A673 (cell line): ENCODE measurements at regions of chrX and their contacts with region 1.

Region 1: DNA sequence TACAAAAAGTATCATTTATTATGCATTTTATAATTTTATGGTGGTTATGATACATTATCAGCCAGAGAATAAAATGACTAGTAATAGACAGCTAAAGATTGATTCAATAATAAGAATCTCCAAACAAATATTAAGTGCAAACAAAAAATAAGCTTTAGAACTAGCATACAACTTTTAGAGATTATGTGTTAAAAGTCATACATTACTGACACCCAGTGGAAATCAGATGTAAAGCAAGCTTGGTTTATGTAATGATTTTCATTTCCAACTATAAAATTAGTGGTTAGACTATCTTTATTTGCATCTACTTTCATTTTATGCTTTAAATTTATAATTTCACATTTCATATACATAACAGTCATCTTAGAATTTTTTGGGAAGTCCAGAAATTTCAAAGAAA is 57.7 kb downstream of the IL13RA2 start:
- DNase-seq: peak; percentile 3
- H3K4me3 ChIP-seq: no peak overlapping the region
- H3K27ac ChIP-seq: no peak overlapping the region
- H3K4me1 ChIP-seq: no peaks in the 10 kb centered on the region
- H3K27me3 ChIP-seq: peaks cover 27% of the 10 kb centered on the region
- CTCF ChIP-seq: peak; percentile 65

Region 2: GRCh38 chrX:115147220-115147619 is 187.5 kb after region 1 on chrX:
- CTCF ChIA-PET with region 1: no interaction called
- POLR2A ChIA-PET with region 1: no interaction called
- intact Hi-C with region 1: loop called (anchors 10 kb)
- DNase-seq: peak; percentile 6
- H3K4me3 ChIP-seq: no peak overlapping the region
- H3K27ac ChIP-seq: no peak overlapping the region
- H3K4me1 ChIP-seq: no peaks in the 10 kb centered on the region
- H3K27me3 ChIP-seq: peaks cover 4% of the 10 kb centered on the region
- CTCF ChIP-seq: peak; percentile 58

Region 3: DNA sequence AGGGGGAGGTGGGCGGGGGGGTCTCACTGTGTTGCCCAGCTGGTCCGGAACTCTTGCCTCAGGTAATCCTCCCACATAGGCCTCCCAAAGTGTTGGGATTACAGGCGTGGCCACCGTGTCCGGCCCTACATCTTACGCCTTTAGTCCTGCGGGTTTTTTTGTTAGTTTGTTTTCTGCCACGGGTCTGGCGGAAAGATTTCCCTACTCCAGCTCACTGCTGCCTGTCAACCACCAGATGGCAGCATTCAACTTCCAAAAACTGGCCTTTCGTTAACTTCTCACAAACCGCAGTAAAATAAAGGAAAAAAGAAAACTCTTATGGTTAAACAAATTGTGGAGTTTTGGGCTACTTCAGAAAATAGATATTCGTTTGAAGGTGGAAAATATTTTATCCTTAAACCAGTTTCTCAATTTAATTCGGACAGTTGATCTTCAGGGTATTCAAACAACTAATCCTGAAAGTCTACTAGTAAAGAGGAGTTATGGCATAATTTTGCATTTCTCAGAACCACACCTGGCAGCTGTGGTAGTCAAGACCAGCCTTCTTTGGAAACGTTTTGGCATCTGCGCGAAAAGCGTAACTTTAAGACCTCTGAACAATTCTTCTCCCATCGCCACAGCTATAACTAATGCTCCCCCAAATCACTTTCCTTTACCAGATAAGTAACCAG is 370.9 kb after region 1 on chrX:
- CTCF ChIA-PET with region 1: no interaction called
- POLR2A ChIA-PET with region 1: no interaction called
- intact Hi-C with region 1: no loop called
- DNase-seq: peak; percentile 74
- H3K4me3 ChIP-seq: no peak overlapping the region
- H3K27ac ChIP-seq: no peak overlapping the region
- H3K4me1 ChIP-seq: no peaks in the 10 kb centered on the region
- H3K27me3 ChIP-seq: no peaks in the 10 kb centered on the region
- CTCF ChIP-seq: peak; percentile 92